Activated T-helper 1 cell treated with anti-CD3 and anti-CD28 coated beads, Interleukin-12 subunit alpha, Interleukin-12 subunit beta, Interleukin-2, Interleukin-4 antibody, amounts not matched to agents 30 ng/mL and 10 ng/mL and 1 ng/mL, durations not matched to agents 14 hours and 24 hours and 36 hours (primary cell): ENCODE measurements at regions of chr21 and their contacts with region 1.

Region 1: DNA sequence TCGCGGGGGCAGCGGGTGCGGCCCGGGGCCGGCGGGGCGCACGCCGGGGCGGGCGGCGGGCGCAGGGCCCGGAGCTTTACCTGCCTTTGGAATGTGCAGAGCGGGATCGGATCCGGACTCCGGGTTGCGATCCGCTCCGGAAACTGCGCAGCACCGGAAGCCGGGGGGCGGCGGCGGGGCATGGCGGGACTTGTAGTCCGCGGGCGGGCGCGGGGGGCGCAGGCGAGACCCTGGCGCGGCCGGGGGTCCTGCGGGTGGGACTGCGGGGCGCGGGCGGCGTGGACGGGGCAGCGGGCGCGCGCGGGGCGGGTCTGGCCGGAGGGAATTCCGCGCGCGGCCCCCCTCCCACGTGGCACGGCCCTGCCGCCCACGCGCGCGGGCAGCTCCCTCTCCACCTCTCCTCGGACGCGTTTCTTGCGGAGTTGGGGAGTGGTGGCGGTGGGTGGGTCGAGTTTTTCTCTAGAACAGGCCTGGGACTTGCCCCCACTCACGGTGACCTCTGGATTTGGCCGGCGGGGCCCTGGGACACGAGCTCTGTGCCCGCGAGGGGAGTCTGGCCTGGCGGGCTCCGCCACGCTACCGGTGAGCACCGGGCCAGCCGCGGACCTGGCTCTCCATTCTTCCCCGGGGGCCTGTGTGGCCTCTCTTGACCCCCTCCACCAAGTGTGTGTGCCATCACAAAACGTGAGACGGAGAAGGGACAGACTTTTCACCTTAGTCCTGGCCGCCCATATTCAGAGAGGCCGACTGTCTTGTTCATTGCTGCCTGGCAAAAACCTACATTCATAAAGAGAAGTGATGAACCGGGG is at the start of gene PRDM15:
- DNase-seq: peak; percentile 79
- H3K4me3 Mint-ChIP-seq: peak within 1 kb of the TSS; percentile 91
- H3K27ac Mint-ChIP-seq: peak within 1 kb of the TSS; percentile 99
- H3K4me1 Mint-ChIP-seq: peaks cover 26% of the 10 kb centered on the region
- H3K27me3 Mint-ChIP-seq: no peaks in the 10 kb centered on the region
- total RNA-seq, gene PRDM15: 18.1 and 18.4 TPM in 2 replicates

Region 2: GRCh38 chr21:41733949-41734645 is 145.3 kb before region 1 on chr21:
- intact Hi-C with region 1: no loop called
- DNase-seq: no peak
- H3K4me3 Mint-ChIP-seq: no peak overlapping the region
- H3K27ac Mint-ChIP-seq: no peak overlapping the region
- H3K4me1 Mint-ChIP-seq: no peaks in the 10 kb centered on the region
- H3K27me3 Mint-ChIP-seq: peaks cover 13% of the 10 kb centered on the region

Region 3: DNA sequence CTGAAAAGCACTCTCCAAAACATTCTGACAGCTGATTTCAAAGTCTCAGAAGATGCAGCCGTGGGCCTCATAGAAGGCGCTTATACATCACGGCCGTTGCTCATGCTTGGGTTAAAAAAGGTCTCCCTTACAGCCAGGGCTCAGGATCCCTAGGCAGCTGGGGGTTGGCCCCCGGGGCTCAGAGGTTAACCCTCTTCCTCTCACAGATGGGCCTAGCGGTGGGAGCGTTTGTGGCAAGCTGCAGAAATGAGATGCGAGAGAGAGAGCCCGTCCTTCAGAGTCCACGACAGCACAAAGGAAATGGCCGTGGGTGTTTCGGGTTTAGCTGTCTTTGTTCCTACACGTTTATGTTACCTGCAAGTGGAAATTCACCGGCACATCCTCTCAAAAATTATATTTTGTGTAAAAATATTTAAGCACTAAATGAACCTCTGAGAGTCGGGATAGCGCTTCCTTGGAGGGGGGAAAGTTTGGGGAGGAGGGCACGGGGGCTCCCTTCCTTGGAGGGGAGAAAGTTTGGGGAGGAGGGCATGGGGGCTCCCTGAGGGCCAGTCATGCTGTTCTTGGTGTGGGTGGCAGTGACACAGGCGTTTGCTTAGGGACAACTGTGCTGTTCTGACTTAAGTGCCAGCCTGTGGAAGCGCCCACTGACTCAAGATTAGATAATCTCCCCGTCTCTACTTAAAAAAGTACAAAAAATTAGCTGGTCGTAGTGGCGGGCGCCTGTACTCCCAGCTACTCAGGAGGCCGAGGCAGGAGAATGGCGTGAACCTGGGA is 20.2 kb after region 1 on chr21:
- intact Hi-C with region 1: loop called (anchors 1 kb)
- DNase-seq: no peak
- H3K4me3 Mint-ChIP-seq: peak overlapping the region; percentile 51
- H3K27ac Mint-ChIP-seq: peak overlapping the region; percentile 83
- H3K4me1 Mint-ChIP-seq: peaks cover 34% of the 10 kb centered on the region
- H3K27me3 Mint-ChIP-seq: no peaks in the 10 kb centered on the region

Region 4: GRCh38 chr21:41926117-41926806 is 46.9 kb after region 1 on chr21:
- intact Hi-C with region 1: loop called (anchors 1 kb)
- DNase-seq: peak; percentile 35
- H3K4me3 Mint-ChIP-seq: peak overlapping the region; percentile 84
- H3K27ac Mint-ChIP-seq: peak overlapping the region; percentile 92
- H3K4me1 Mint-ChIP-seq: peaks cover 69% of the 10 kb centered on the region
- H3K27me3 Mint-ChIP-seq: peaks cover 6% of the 10 kb centered on the region

Region 5: DNA sequence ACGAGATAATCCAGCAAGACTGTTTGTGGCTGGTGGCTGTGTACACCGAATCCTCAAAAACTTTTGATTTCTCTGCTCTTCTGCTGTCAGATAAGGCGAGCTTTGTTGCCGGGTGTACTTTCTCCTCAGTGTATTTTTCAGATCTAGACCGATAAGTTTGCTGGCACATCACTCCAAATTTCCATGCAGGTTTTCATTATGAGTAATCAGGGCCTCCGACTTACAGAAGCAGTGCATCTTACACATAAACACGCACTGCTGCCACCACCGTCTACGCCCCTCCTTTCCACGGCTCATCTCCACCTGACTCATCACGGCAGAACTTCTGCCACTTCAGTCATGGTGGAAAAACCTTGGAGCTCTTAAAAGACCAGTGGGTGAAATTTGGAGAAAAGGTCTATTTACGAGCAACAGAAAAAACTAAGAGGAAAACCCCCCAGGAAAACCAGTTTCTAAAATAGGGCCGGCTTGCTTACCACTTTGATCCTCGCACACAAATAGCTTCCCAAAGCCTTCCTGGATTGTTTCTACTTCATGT is 123.1 kb after region 1 on chr21:
- intact Hi-C with region 1: loop called (anchors 5 kb)
- DNase-seq: peak; percentile 78
- H3K4me3 Mint-ChIP-seq: peak overlapping the region; percentile 34
- H3K27ac Mint-ChIP-seq: peak overlapping the region; percentile 85
- H3K4me1 Mint-ChIP-seq: peaks cover 58% of the 10 kb centered on the region
- H3K27me3 Mint-ChIP-seq: no peaks in the 10 kb centered on the region

Region 6: DNA sequence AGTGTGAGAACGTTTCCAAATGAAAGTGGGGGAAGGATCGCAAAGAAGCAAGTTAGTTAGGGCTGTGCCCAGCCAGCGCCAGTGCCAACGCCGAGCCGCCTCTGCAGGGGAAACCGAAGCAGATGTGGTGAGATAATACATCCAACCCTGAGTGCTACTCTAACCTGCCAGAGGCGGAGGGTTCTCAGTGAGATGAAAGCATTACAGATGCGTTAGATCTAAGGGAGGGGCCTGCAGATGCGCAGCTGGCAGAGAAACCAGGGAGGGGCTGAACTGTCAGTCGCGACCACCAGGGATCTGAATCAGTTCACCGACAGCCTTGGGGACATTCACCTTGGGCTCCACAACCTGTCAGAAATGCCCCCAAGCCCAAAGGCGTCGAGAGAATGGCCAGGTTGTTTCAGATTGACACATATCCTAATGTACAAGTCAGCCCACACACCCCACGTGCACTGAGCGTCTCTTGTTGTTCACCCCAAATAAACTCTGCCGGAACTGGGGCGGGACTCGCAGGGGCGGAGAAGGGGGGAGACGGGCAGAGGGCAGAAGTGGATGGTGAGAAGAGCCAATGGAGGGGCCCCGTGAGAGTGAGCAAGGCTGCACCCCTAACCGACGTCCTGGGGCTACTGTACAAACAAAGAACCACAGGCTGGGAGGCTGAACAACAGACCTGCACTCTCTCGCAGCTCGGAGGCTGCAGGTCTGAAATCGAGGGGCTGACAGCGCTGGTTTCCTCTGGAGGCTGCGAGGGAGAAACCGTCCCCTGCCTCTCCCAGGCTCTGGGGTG is 183.0 kb after region 1 on chr21:
- intact Hi-C with region 1: loop called (anchors 5 kb)
- DNase-seq: peak; percentile 70
- H3K4me3 Mint-ChIP-seq: peak overlapping the region; percentile 64
- H3K27ac Mint-ChIP-seq: peak overlapping the region; percentile 73
- H3K4me1 Mint-ChIP-seq: peaks cover 40% of the 10 kb centered on the region
- H3K27me3 Mint-ChIP-seq: peaks cover 8% of the 10 kb centered on the region

Region 7: DNA sequence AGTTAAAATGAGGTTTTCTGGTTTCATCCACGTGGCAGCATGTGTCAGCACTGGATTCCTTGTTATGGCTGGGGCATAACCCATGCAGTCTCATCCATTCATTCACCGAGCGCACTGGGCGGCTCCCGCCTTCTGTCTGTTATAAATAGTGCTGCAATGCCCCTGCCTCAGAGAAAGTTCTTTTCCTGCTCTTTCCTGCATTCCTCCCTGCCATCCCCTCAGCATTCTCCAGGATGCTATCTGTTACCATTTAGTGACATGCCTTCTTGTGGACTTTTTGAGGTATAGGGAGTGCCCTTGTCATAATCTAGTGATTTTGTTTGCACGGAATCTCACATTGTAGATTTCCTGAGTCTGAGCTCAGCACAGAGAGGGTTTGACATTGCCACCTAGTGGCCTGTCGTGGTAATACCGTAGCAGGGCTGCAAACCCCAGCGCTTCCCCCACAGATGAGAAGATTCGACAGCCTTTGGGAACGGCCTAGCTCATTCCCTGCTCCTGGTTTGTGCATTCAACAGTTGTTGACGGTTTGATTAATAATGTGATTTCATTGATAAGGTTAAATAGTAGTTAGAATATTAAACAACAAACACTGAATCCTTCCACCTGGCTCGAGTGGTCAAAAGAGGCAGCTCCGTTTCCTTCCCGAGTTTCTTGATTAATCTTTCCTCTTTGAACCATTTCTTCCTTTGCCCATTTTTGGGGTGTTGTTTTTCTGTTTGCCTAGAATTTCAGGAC is 238.0 kb after region 1 on chr21:
- intact Hi-C with region 1: loop called (anchors 1 kb)
- DNase-seq: peak; percentile 47
- H3K4me3 Mint-ChIP-seq: no peak overlapping the region
- H3K27ac Mint-ChIP-seq: no peak overlapping the region
- H3K4me1 Mint-ChIP-seq: peaks cover 13% of the 10 kb centered on the region
- H3K27me3 Mint-ChIP-seq: peaks cover 38% of the 10 kb centered on the region